Activated CD4-positive, alpha-beta memory T cell treated with anti-CD3 and anti-CD28 coated beads, Interleukin-2, amount 10 ng/mL, durations not matched to agents 7 days and 5 days (primary cell): ENCODE measurements at regions of chr19 and their contacts with region 1.

Region 1: GRCh38 chr19:19488875-19489690 is 26.3 kb downstream of the TSSK6 start:
- DNase-seq: peak; percentile 98
- H3K4me3 Mint-ChIP-seq: peak overlapping the region; percentile 65
- H3K27ac Mint-ChIP-seq: peak overlapping the region; percentile 98
- H3K4me1 Mint-ChIP-seq: peaks cover 38% of the 10 kb centered on the region
- H3K27me3 Mint-ChIP-seq: no peaks in the 10 kb centered on the region

Region 2: DNA sequence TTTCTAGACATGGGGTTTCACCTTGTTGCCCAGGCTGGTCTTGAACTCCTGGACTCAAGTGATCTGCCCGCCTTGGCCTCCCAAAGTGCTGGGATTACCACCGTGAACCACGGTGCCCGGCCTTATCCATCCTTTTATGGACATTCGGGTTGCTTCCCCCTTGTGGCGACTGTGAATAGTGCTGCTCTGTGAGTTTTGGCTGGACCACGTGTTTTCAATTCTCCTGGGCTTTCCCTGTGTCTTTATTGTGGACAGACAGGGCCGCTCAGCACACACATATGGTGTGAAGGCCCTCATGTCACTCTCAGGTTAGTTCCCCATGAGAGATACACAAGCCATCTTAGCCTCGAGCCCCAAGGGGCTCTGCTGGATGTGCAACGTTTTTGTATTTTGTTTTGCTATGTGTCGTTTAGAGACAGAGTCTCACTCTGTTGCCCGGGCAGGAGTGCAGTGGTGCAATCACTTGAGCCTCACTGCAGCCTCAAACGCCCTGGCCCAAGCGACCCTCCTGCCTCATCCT is 127.9 kb before region 1 on chr19:
- CTCF ChIA-PET with region 1: interaction called, 155 read pairs
- POLR2A ChIA-PET with region 1: interaction called, 79 read pairs
- DNase-seq: peak; percentile 79
- H3K4me3 Mint-ChIP-seq: no peak overlapping the region
- H3K27ac Mint-ChIP-seq: peak overlapping the region; percentile 14
- H3K4me1 Mint-ChIP-seq: peaks cover 31% of the 10 kb centered on the region
- H3K27me3 Mint-ChIP-seq: no peaks in the 10 kb centered on the region

Region 3: DNA sequence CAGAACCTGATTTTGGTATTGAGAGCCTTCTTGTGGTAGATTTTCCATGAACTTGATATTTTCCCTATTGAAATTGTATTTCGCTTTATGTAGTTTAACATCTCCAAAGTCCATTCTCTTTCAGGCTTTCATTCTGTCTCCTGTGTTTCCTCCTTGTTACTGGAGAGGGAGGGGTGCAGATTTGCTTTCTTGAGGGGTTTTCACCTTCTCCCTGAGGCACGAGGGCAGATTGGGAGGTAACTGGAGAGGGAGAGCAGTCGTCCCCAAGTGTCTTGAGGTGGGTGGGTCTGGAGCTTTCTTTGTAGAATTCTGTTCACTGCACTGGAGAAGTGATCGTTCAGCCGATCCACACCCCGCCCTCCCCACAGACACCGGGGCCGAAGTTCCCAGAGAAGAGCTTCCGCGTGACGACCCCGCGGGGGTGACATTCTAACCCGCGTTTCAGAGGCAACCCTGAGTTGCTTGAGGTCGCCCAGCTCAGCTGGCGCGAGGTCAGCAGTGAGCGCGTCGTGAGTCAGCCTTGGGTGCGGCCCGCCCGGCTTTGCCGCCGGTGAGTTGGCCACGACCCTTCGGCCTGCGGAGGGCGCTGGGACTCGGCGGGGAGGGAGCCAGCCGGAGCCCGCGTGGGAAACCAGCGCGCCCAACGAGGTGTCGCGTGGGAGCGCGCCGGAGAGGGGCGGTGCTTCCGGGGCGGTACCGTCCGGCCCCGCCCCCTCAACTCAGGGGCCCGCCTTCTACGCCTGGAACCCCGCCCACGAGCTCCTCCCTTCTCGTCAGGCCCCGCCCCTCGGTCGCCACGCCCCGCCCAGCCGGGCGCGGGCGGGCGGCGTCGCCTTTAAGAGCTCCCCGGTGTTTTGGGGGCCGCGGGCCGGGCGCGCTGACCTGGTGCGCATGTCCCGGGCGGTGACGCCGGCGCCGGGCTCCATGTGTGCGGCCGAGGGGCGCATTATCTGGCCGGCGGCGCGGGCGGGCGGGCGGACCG is 83.9 kb before region 1 on chr19 and contains the start of gene GATAD2A:
- CTCF ChIA-PET with region 1: interaction called, 22 read pairs
- POLR2A ChIA-PET with region 1: interaction called, 50 read pairs
- DNase-seq: peak; percentile 91
- H3K4me3 Mint-ChIP-seq: peak within 1 kb of the TSS; percentile 91
- H3K27ac Mint-ChIP-seq: peak within 1 kb of the TSS; percentile 88
- H3K4me1 Mint-ChIP-seq: peaks cover 64% of the 10 kb centered on the region
- H3K27me3 Mint-ChIP-seq: no peaks in the 10 kb centered on the region
- total RNA-seq, gene GATAD2A: 109 to 113 TPM

Region 4: GRCh38 chr19:19459707-19460251 is 29.3 kb before region 1 on chr19:
- CTCF ChIA-PET with region 1: interaction called, 8 read pairs
- POLR2A ChIA-PET with region 1: interaction called, 31 read pairs
- DNase-seq: peak; percentile 80
- H3K4me3 Mint-ChIP-seq: peak overlapping the region; percentile 80
- H3K27ac Mint-ChIP-seq: peak overlapping the region; percentile 98
- H3K4me1 Mint-ChIP-seq: peaks cover 74% of the 10 kb centered on the region
- H3K27me3 Mint-ChIP-seq: no peaks in the 10 kb centered on the region